ENCODE measurements at regions of chr1 and their contacts with region 1.

Region 1: GRCh38 chr1:100459358-100460114 is 78.4 kb upstream of the GPR88 start:
- DNase-seq: no peak
- H3K4me3 ChIP-seq: no peak overlapping the region
- H3K27ac ChIP-seq: no peak overlapping the region
- H3K4me1 ChIP-seq: peaks cover 13 to 32% (median 16%) of the 10 kb centered on the region in 4 experiments
- H3K27me3 ChIP-seq: no peaks in the 10 kb centered on the region
- CTCF ChIP-seq: peak; percentile 76 to 87 (median 78)
- EP300 ChIP-seq: no peak
- POLR2A ChIP-seq: no peak
- RAD21 ChIP-seq: peak; percentile 97

Region 2: GRCh38 chr1:100265931-100266740 is 193.4 kb before region 1 on chr1 and contains the start of gene RTCA:
- CTCF ChIA-PET with region 1: interaction called, 17 read pairs
- POLR2A ChIA-PET with region 1: interaction called, 3 read pairs
- DNase-seq: peak; percentile 87 to 95
- H3K4me3 ChIP-seq: peak within 1 kb of the TSS; percentile 83 to 93 (median 90)
- H3K27ac ChIP-seq: peak within 1 kb of the TSS; percentile 87
- H3K4me1 ChIP-seq: peaks cover 0 to 3% (median under 1%) of the 10 kb centered on the region in 4 experiments; a peak in 3 of 7 replicates
- H3K27me3 ChIP-seq: no peaks in the 10 kb centered on the region
- CTCF ChIP-seq: no peak
- EP300 ChIP-seq: no peak
- POLR2A ChIP-seq: peak; percentile 51 to 90
- RAD21 ChIP-seq: peak in 1 of 2 experiments; percentile 21; a peak in 2 of 4 replicates
- total RNA-seq, gene RTCA: 31.6 and 31.8 TPM in 2 replicates

Region 3: DNA sequence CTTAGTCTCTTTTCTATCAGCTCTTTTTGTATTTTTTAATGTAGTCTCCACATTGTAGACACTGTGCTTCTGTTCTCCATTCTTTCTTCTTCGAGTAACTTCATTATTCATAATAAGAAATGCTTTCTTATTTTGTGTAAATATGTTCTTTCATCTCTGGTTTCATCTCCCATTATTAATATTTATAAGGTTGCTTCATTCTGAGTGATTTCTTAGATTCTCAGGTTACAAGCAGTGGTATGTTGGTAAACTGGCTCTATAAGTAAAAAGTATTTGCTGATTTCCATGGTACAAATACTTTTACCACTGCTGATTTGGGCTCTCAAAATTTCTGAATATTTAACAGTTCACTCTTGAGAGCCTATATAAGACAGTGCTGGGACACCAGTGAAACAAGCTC is 26.0 kb before region 1 on chr1:
- CTCF ChIA-PET with region 1: interaction called, 18 read pairs
- POLR2A ChIA-PET with region 1: interaction called, 3 read pairs
- DNase-seq: no peak
- H3K4me3 ChIP-seq: no peak overlapping the region
- H3K27ac ChIP-seq: no peak overlapping the region
- H3K4me1 ChIP-seq: peaks cover 0 to 14% (median 2%) of the 10 kb centered on the region in 4 experiments; a peak in 6 of 7 replicates
- H3K27me3 ChIP-seq: no peaks in the 10 kb centered on the region
- CTCF ChIP-seq: no peak
- EP300 ChIP-seq: no peak
- POLR2A ChIP-seq: no peak
- RAD21 ChIP-seq: no peak

Region 4: DNA sequence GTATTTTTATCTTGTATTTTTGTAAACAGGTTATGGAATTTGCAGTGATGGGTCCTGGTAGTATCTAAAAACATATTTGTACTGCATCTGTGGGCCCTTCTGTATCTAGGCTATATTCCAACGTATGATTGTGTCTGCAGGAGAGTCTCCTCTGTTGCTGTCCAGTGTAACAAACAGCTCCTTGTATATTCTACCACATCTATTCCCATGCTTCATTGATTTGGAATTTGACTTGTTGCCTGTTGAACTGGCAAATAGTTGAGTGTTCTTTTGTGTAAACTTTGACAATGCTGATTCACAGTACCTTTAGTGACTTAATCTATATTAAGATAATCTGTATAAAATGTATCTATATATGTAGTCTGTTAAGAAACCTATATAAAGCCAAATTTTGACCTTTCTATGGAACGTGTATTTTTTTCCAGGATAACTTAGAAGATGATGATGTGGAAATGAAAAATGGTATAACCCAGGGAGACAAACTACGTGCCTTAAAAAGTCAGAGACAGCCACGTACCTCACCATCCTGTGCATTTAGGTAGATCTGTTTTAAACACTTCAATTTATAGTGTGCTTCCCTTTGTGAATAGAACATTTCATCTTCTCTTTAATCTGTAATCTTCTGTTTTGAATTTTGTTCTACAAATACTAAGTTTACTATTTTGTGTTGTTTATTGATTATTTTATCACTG is 35.0 kb after region 1 on chr1:
- CTCF ChIA-PET with region 1: interaction called, 11 read pairs
- POLR2A ChIA-PET with region 1: no interaction called
- DNase-seq: no peak
- H3K4me3 ChIP-seq: no peak overlapping the region
- H3K27ac ChIP-seq: no peak overlapping the region
- H3K4me1 ChIP-seq: no peaks in the 10 kb centered on the region
- H3K27me3 ChIP-seq: peaks cover 0 to under 1% (median 0%) of the 10 kb centered on the region in 4 experiments; a peak in 1 of 7 replicates
- CTCF ChIP-seq: no peak
- EP300 ChIP-seq: no peak
- POLR2A ChIP-seq: no peak
- RAD21 ChIP-seq: no peak

Region 5: DNA sequence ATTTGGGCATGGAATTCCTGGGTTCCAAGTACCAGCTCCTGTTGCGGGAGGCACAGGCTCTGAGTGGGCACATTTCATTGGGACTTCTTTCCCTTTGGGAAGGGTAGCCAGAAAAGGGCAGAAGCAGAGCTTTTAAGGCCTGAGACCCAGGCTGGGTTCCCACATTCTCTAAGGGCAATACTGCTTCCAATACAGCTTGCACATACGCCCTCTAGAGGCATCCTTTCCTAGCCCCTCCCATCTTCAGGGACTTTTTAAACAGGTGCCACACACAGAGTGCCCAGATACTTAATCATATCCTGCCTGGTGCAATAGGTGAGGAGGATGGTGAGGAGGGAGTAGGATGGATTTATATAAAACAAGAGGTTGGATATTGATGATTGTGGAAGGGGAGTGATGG is 84.1 kb after region 1 on chr1:
- CTCF ChIA-PET with region 1: interaction called, 11 read pairs
- POLR2A ChIA-PET with region 1: no interaction called
- DNase-seq: peak in 1 of 2 experiments; percentile 54
- H3K4me3 ChIP-seq: no peak overlapping the region
- H3K27ac ChIP-seq: no peak overlapping the region
- H3K4me1 ChIP-seq: peaks cover 0 to 11% (median 3%) of the 10 kb centered on the region in 4 experiments; a peak in 5 of 7 replicates
- H3K27me3 ChIP-seq: peaks cover 24 to 28% (median 27%) of the 10 kb centered on the region in 4 experiments
- CTCF ChIP-seq: peak; percentile 26 to 86 (median 56)
- EP300 ChIP-seq: no peak
- POLR2A ChIP-seq: no peak
- RAD21 ChIP-seq: peak; percentile 59 to 74

Region 6: GRCh38 chr1:100657876-100658715 is 198.6 kb after region 1 on chr1:
- CTCF ChIA-PET with region 1: no interaction called
- POLR2A ChIA-PET with region 1: no interaction called
- DNase-seq: no peak
- H3K4me3 ChIP-seq: no peak overlapping the region
- H3K27ac ChIP-seq: no peak overlapping the region
- H3K4me1 ChIP-seq: no peaks in the 10 kb centered on the region; a peak in 1 of 7 replicates
- H3K27me3 ChIP-seq: no peaks in the 10 kb centered on the region
- CTCF ChIP-seq: no peak
- EP300 ChIP-seq: no peak
- POLR2A ChIP-seq: no peak
- RAD21 ChIP-seq: no peak

Measured in H1 (cell line).